CD4-positive, alpha-beta T cell (primary cell): ENCODE measurements at regions of chr5 and their contacts with region 1.

Region 1: DNA sequence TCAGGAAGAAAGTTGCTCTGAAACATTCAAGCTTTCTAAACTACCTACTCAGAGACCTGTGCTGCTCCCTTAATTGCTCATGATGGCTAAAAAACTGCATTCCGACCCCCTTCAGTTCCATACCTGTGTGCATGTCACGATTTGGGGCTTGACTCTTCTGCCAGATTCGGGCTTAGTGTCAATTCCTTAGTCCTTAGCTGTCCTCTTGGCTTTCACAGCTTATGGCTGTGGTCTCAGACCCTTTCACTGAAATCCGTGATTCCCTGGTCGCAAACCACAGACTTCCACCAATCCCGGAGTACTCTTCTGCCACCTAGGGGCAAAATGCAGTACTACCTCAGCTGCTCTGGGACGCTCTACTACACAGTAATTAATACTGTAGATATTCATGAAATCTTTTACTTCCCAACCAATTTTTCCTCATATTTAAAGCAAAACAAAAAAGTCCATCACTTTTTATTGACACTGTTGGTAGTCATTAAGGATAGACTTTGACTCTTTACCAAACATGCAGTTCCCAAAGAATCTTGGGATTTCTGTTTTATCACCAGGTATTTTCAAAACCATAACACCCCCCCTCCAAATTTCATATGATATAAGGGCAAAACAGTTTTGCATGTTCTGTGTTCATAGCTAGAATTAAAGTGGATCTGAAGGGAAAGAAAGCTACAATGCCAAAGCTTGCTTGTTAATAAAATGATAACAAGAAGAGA is 617.4 kb downstream of the SLCO4C1 start:
- DNase-seq: peak in 11 of 14 experiments; percentile 0 to 35 (median 17)
- ATAC-seq: peak; percentile 34
- H3K4me3 ChIP-seq: no peak overlapping the region
- H3K4me3 Mint-ChIP-seq: no peak overlapping the region
- H3K27ac ChIP-seq: no peak overlapping the region
- H3K27ac Mint-ChIP-seq: no peak overlapping the region
- H3K4me1 ChIP-seq: peaks cover 4% of the 10 kb centered on the region
- H3K4me1 Mint-ChIP-seq: no peaks in the 10 kb centered on the region
- H3K27me3 ChIP-seq: no peaks in the 10 kb centered on the region
- H3K27me3 Mint-ChIP-seq: peaks cover 4% of the 10 kb centered on the region
- CTCF ChIP-seq: peak; percentile 71

Region 2: DNA sequence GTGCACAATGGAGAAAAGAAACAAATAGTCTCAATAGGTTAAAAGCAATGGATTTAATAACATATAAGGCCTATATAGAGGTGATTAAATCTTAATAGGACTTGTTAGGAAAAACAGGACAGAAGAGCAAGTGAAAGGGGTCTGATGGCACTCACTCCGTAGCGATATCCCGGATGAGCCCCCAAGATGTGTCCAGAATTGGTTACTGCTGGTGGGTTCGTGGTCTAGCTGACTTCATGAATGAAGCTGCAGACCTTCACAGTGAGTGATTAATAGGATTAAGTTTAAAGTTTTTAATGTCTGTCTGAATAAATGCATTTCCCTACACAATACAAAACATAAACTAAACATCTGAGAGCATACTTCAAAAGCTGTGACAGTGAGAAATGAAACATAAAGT is 1253.8 kb before region 1 on chr5:
- CTCF ChIA-PET with region 1: no interaction called
- POLR2A ChIA-PET with region 1: no interaction called
- intact Hi-C with region 1: loop called in 1 of 2 experiments (anchors 5 kb)
- DNase-seq: no peak
- ATAC-seq: no peak
- H3K4me3 ChIP-seq: no peak overlapping the region
- H3K4me3 Mint-ChIP-seq: no peak overlapping the region
- H3K27ac ChIP-seq: no peak overlapping the region
- H3K27ac Mint-ChIP-seq: no peak overlapping the region
- H3K4me1 ChIP-seq: no peaks in the 10 kb centered on the region
- H3K4me1 Mint-ChIP-seq: no peaks in the 10 kb centered on the region
- H3K27me3 ChIP-seq: no peaks in the 10 kb centered on the region
- H3K27me3 Mint-ChIP-seq: no peaks in the 10 kb centered on the region
- CTCF ChIP-seq: no peak

Region 3: GRCh38 chr5:100623719-100624118 is 1054.9 kb before region 1 on chr5:
- CTCF ChIA-PET with region 1: no interaction called
- POLR2A ChIA-PET with region 1: no interaction called
- intact Hi-C with region 1: loop called in 1 of 2 experiments (anchors 2 kb)
- DNase-seq: peak in 3 of 14 experiments; percentile 52 to 57 (median 56)
- ATAC-seq: no peak
- H3K4me3 ChIP-seq: no peak overlapping the region
- H3K4me3 Mint-ChIP-seq: no peak overlapping the region
- H3K27ac ChIP-seq: no peak overlapping the region
- H3K27ac Mint-ChIP-seq: no peak overlapping the region
- H3K4me1 ChIP-seq: no peaks in the 10 kb centered on the region
- H3K4me1 Mint-ChIP-seq: no peaks in the 10 kb centered on the region
- H3K27me3 ChIP-seq: no peaks in the 10 kb centered on the region
- H3K27me3 Mint-ChIP-seq: no peaks in the 10 kb centered on the region
- CTCF ChIP-seq: peak; percentile 67